CD4-positive, alpha-beta memory T cell (primary cell): ENCODE measurements at regions of chr2 and their contacts with region 1.

Region 1: GRCh38 chr2:197851451-197851850 is 47.1 kb downstream of the PLCL1 start:
- DNase-seq: no peak
- H3K4me3 ChIP-seq: no peak overlapping the region
- H3K4me3 Mint-ChIP-seq: peak overlapping the region in 1 of 8 donors; percentile 1
- H3K27ac ChIP-seq: no peak overlapping the region
- H3K27ac Mint-ChIP-seq: no peak overlapping the region
- H3K4me1 ChIP-seq: peaks cover 44% of the 10 kb centered on the region
- H3K4me1 Mint-ChIP-seq: peaks cover 45 to 70% (median 56%) of the 10 kb centered on the region in 4 donors
- H3K27me3 ChIP-seq: no peaks in the 10 kb centered on the region
- H3K27me3 Mint-ChIP-seq: no peaks in the 10 kb centered on the region

Region 2: GRCh38 chr2:197705121-197705911 is 146.1 kb before region 1 on chr2 and contains the start of gene MARS2:
- CTCF ChIA-PET with region 1: no interaction called
- POLR2A ChIA-PET with region 1: no interaction called
- intact Hi-C with region 1: no loop called
- DNase-seq: peak; percentile 91 to 94 (median 92)
- H3K4me3 ChIP-seq: peak within 1 kb of the TSS; percentile 89 to 93
- H3K4me3 Mint-ChIP-seq: peak within 1 kb of the TSS; percentile 84 to 94 (median 90)
- H3K27ac ChIP-seq: peak within 1 kb of the TSS; percentile 77
- H3K27ac Mint-ChIP-seq: peak within 1 kb of the TSS; percentile 84 to 98 (median 95)
- H3K4me1 ChIP-seq: peaks cover 51% of the 10 kb centered on the region
- H3K4me1 Mint-ChIP-seq: peaks cover 23 to 54% (median 41%) of the 10 kb centered on the region in 4 donors
- H3K27me3 ChIP-seq: no peaks in the 10 kb centered on the region
- H3K27me3 Mint-ChIP-seq: peaks cover 3 to 5% of the 10 kb centered on the region in 2 donors
- total RNA-seq, gene MARS2: 12.1 to 12.3 TPM

Region 3: GRCh38 chr2:197813093-197813787 is 38.2 kb before region 1 on chr2:
- CTCF ChIA-PET with region 1: interaction called, 14 read pairs
- POLR2A ChIA-PET with region 1: no interaction called
- intact Hi-C with region 1: no loop called
- DNase-seq: no peak
- H3K4me3 ChIP-seq: no peak overlapping the region
- H3K4me3 Mint-ChIP-seq: no peak overlapping the region
- H3K27ac ChIP-seq: no peak overlapping the region
- H3K27ac Mint-ChIP-seq: no peak overlapping the region
- H3K4me1 ChIP-seq: peaks cover 34% of the 10 kb centered on the region
- H3K4me1 Mint-ChIP-seq: peaks cover 32 to 47% (median 36%) of the 10 kb centered on the region in 4 donors
- H3K27me3 ChIP-seq: no peaks in the 10 kb centered on the region
- H3K27me3 Mint-ChIP-seq: peaks cover 2% of the 10 kb centered on the region in 2 donors

Region 4: DNA sequence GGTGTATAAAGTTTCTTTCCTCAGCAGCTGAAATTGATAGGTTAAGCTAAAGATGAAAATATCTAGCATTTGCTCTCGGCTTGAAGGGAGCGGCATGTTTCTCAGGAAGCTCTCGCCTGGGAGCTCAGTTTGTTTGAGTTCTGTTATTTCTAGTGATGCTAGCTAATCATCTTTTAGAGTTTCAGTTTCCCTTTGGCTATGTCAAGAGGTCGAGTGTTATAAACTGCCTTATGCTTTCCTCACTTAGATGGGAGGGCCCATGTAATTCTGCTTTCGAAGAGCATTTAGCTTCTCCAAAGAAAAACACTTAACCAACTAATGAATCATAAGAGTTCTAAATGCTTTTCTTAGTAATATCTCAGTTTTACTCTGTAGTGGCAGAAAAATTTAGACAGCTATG is 13.4 kb before region 1 on chr2:
- CTCF ChIA-PET with region 1: interaction called, 16 read pairs
- POLR2A ChIA-PET with region 1: interaction called, 7 read pairs
- intact Hi-C with region 1: loop called (anchors 1 kb)
- DNase-seq: peak; percentile 36 to 54 (median 39)
- H3K4me3 ChIP-seq: no peak overlapping the region
- H3K4me3 Mint-ChIP-seq: peak overlapping the region; percentile 70 to 92 (median 78)
- H3K27ac ChIP-seq: peak overlapping the region; percentile 50
- H3K27ac Mint-ChIP-seq: peak overlapping the region; percentile 87 to 94 (median 92)
- H3K4me1 ChIP-seq: peaks cover 45% of the 10 kb centered on the region
- H3K4me1 Mint-ChIP-seq: peaks cover 32 to 56% (median 48%) of the 10 kb centered on the region in 4 donors
- H3K27me3 ChIP-seq: no peaks in the 10 kb centered on the region
- H3K27me3 Mint-ChIP-seq: no peaks in the 10 kb centered on the region

Region 5: GRCh38 chr2:197873293-197873701 is 21.8 kb after region 1 on chr2:
- CTCF ChIA-PET with region 1: interaction called, 6 read pairs
- POLR2A ChIA-PET with region 1: interaction called, 4 read pairs
- intact Hi-C with region 1: loop called (anchors 2 kb)
- DNase-seq: no peak
- H3K4me3 ChIP-seq: no peak overlapping the region
- H3K4me3 Mint-ChIP-seq: no peak overlapping the region
- H3K27ac ChIP-seq: no peak overlapping the region
- H3K27ac Mint-ChIP-seq: no peak overlapping the region
- H3K4me1 ChIP-seq: peaks cover 43% of the 10 kb centered on the region
- H3K4me1 Mint-ChIP-seq: peaks cover 30 to 50% (median 42%) of the 10 kb centered on the region in 4 donors
- H3K27me3 ChIP-seq: no peaks in the 10 kb centered on the region
- H3K27me3 Mint-ChIP-seq: no peaks in the 10 kb centered on the region

Region 6: DNA sequence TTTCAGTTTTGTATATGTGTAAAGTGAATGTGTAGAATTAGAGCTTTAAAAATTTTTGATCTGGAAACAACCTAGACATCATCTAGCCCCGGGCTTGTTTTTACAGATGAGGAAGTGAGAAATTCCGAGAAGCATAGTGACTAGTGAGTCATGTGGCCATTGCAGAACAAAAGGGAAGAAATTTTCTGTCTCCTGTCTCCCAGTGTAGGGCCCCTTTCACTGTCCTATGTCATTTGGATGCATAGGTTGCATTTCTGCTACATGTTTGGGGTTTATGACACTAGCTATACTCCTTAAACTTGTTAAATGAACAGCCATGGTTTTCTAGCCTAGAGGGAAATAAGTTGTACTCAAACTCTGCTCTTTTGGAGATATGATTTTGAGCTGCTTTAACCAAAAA is 37.6 kb after region 1 on chr2:
- CTCF ChIA-PET with region 1: interaction called, 3 read pairs
- POLR2A ChIA-PET with region 1: no interaction called
- intact Hi-C with region 1: loop called (anchors 5 kb)
- DNase-seq: peak; percentile 22 to 61 (median 28)
- H3K4me3 ChIP-seq: no peak overlapping the region
- H3K4me3 Mint-ChIP-seq: peak overlapping the region in 7 of 8 donors; percentile 10 to 75 (median 69)
- H3K27ac ChIP-seq: no peak overlapping the region
- H3K27ac Mint-ChIP-seq: peak overlapping the region; percentile 48 to 93 (median 81)
- H3K4me1 ChIP-seq: peaks cover 59% of the 10 kb centered on the region
- H3K4me1 Mint-ChIP-seq: peaks cover 29 to 57% (median 40%) of the 10 kb centered on the region in 4 donors
- H3K27me3 ChIP-seq: no peaks in the 10 kb centered on the region
- H3K27me3 Mint-ChIP-seq: no peaks in the 10 kb centered on the region

Region 7: DNA sequence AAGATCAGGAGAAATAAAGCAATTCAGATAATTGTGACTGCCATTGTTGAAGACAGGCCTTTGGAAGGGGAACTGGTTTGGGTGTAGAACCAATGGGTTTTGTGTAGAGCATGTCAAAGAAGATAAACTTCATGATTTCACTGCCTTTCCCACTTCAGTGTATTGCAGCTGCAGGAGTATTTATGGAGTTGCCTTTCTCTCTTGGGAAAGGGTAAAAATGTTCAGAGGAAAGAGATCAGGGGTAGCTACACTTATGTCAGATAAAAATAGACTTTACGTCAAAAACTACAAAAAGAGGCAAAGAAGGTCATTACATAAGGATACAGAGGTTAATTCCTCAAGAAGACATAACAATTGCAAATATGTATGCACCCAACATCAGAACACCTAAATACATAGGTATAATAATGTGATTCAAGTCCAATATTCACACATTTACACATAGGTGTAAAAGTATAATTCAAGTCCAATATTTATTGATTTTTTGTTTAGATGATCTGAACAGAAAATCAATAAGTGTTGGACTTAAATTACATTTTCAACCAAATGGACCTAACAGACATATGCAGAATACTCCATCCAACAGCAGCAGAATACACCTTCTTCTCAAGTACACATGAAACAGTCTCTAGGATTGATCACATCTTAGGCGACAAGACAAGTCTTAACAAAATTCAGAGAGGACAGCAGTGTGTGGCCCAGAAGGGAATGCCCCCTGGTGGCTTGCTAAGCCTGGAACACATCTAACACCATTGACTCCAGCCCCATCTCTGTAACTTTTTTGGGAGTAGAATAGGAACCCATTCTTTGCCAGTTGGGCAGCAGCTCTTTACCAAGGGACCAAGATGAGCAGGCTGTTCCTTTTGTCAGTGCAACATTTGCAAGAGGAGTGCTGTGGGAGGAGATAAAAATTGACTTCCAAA is 202.6 kb after region 1 on chr2:
- CTCF ChIA-PET with region 1: interaction called, 17 read pairs
- POLR2A ChIA-PET with region 1: no interaction called
- intact Hi-C with region 1: loop called (anchors 1 kb)
- DNase-seq: peak; percentile 30 to 46 (median 35)
- H3K4me3 ChIP-seq: no peak overlapping the region
- H3K4me3 Mint-ChIP-seq: no peak overlapping the region
- H3K27ac ChIP-seq: no peak overlapping the region
- H3K27ac Mint-ChIP-seq: peak overlapping the region in 1 of 7 donors; percentile 16
- H3K4me1 ChIP-seq: no peaks in the 10 kb centered on the region
- H3K4me1 Mint-ChIP-seq: peaks cover 0 to 17% (median 14%) of the 10 kb centered on the region in 4 donors
- H3K27me3 ChIP-seq: no peaks in the 10 kb centered on the region
- H3K27me3 Mint-ChIP-seq: no peaks in the 10 kb centered on the region

Region 8: DNA sequence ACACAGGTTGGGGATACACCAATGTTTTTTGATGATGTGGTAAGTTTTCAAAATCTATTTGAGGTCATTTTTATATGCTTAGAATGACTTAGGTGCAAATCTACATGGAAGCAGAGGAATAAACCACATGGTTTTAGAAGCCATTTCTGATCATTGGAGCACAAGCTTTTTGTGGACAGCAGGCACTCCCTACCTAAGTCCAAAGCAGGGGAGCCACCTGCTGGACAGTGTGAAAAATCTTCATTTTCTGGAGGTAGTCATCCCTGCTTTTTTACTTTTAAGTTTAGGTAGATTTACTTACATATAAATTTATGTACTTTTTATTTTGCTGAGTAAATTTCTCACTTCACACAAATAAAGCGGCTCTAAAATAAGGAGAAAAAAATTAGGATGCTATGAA is 276.2 kb after region 1 on chr2:
- CTCF ChIA-PET with region 1: interaction called, 27 read pairs
- POLR2A ChIA-PET with region 1: no interaction called
- intact Hi-C with region 1: loop called (anchors 1 kb)
- DNase-seq: peak in 4 of 5 donors; percentile 37 to 49 (median 42)
- H3K4me3 ChIP-seq: no peak overlapping the region
- H3K4me3 Mint-ChIP-seq: no peak overlapping the region
- H3K27ac ChIP-seq: no peak overlapping the region
- H3K27ac Mint-ChIP-seq: no peak overlapping the region
- H3K4me1 ChIP-seq: no peaks in the 10 kb centered on the region
- H3K4me1 Mint-ChIP-seq: peaks cover 0 to 1% (median under 1%) of the 10 kb centered on the region in 4 donors
- H3K27me3 ChIP-seq: no peaks in the 10 kb centered on the region
- H3K27me3 Mint-ChIP-seq: peaks cover 0 to 1% of the 10 kb centered on the region in 2 donors